ENCODE measurements at regions of chr11 and their contacts with region 1.

Region 1: GRCh38 chr11:65117216-65118096 is at the start of gene ZNHIT2:
- DNase-seq: peak; percentile 100
- ATAC-seq: peak; percentile 68
- H3K4me3 Mint-ChIP-seq: peak within 1 kb of the TSS; percentile 88
- H3K27ac Mint-ChIP-seq: peak within 1 kb of the TSS; percentile 95
- H3K4me1 Mint-ChIP-seq: peaks cover 57% of the 10 kb centered on the region
- H3K27me3 Mint-ChIP-seq: no peaks in the 10 kb centered on the region
- total RNA-seq, gene ZNHIT2: 7.1 to 9.7 TPM

Region 2: GRCh38 chr11:64341851-64342791 is 775.3 kb before region 1 on chr11:
- CTCF ChIA-PET with region 1: no interaction called
- POLR2A ChIA-PET with region 1: no interaction called
- intact Hi-C with region 1: loop called in 1 of 2 experiments (anchors 10 kb)
- DNase-seq: peak; percentile 96
- ATAC-seq: peak; percentile 77
- H3K4me3 Mint-ChIP-seq: no peak overlapping the region
- H3K27ac Mint-ChIP-seq: no peak overlapping the region
- H3K4me1 Mint-ChIP-seq: peaks cover 28% of the 10 kb centered on the region
- H3K27me3 Mint-ChIP-seq: no peaks in the 10 kb centered on the region

Region 3: DNA sequence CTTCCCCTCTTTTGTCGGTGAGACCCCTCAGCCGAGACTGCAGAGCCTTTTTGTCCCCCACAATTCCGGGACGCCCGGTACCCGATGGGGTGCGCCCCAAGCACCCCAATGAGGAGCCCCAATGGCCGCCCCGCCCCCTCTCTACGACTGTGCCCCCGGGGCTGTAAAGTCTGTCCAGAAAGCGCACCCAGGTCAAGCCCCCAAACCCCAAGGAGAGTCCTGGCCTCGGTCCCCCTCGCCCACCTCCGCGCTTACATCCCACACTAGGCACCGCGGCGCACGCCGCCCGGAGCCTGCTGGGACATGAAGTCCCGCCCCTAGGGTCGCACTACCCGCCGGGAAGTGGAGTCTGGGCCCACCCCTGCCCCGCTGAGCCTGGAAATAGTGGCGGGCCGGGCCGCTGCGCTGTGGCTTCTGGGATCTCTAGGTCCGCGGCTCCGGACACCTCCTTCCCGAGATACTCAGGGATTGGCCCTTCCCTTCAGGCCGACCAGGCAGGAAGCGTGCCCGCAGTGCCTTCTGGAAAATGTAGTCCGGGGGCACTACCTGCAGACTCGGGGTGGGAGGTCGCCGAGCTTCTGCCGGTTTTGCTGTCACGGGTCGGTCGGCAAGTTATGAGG is 307.1 kb before region 1 on chr11 and contains the start of gene MEN1:
- CTCF ChIA-PET with region 1: no interaction called
- POLR2A ChIA-PET with region 1: no interaction called
- intact Hi-C with region 1: loop called in 1 of 2 experiments (anchors 1 kb)
- DNase-seq: peak; percentile 92
- ATAC-seq: peak; percentile 95
- H3K4me3 Mint-ChIP-seq: peak within 1 kb of the TSS; percentile 93
- H3K27ac Mint-ChIP-seq: peak within 1 kb of the TSS; percentile 85
- H3K4me1 Mint-ChIP-seq: peaks cover 21% of the 10 kb centered on the region
- H3K27me3 Mint-ChIP-seq: no peaks in the 10 kb centered on the region
- total RNA-seq, gene MEN1: 34.8 to 38.5 TPM

Region 4: DNA sequence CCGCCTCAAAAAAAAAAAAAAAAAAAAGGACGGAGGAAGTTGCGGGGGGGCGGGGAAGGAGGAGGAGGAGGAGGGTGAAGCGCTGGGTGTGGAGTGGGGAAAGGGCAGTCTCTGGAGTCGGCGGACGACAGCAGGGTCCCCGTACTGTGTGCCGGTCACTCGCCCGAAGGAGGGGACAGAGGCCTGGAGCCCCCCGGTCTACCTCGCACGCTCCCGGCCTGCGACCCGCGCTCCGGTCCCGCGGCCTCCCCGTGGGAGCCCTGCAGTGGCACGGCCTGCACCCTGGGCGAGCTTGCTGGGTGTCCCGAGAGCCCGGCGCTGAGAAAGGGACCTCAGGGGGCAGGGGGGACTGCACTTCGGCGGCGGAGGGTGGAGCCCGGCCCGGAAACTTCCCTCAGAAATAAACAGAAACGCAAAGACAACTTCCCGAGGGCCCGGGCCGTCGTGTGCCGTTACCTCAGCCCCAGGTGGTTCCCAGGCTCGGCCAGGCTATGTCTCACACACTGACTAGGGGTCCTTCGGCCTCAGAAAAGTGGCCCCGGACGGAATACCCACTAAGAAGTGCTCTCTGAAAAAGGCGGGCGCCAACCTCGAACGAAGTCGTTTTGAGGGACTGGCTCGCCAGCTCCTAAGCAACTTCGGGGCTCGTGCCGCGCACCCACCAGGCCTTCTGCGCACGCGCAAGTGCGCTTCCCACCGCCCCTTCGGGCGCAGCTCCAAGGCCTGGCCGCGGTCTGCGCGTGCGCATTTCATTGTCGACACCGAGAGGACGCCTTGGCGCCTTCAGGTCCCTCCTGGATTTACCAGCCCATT is 145.8 kb before region 1 on chr11 and contains the start of gene MAJIN:
- CTCF ChIA-PET with region 1: no interaction called
- POLR2A ChIA-PET with region 1: no interaction called
- intact Hi-C with region 1: no loop called
- DNase-seq: peak; percentile 96
- ATAC-seq: peak; percentile 48
- H3K4me3 Mint-ChIP-seq: peak within 1 kb of the TSS; percentile 63
- H3K27ac Mint-ChIP-seq: peak within 1 kb of the TSS; percentile 94
- H3K4me1 Mint-ChIP-seq: peaks cover 42% of the 10 kb centered on the region
- H3K27me3 Mint-ChIP-seq: no peaks in the 10 kb centered on the region
- total RNA-seq, gene MAJIN: 1.2 to 1.6 TPM

Region 5: GRCh38 chr11:65013692-65014145 is 103.7 kb before region 1 on chr11:
- CTCF ChIA-PET with region 1: interaction called, 6 read pairs
- POLR2A ChIA-PET with region 1: no interaction called
- intact Hi-C with region 1: loop called (anchors 1 kb)
- DNase-seq: peak; percentile 90
- ATAC-seq: peak; percentile 87
- H3K4me3 Mint-ChIP-seq: peak overlapping the region; percentile 83
- H3K27ac Mint-ChIP-seq: peak overlapping the region; percentile 96
- H3K4me1 Mint-ChIP-seq: peaks cover 25% of the 10 kb centered on the region
- H3K27me3 Mint-ChIP-seq: no peaks in the 10 kb centered on the region

Region 6: GRCh38 chr11:65083834-65084597 is 33.4 kb before region 1 on chr11 and contains the starts of genes CDCA5 and ZFPL1:
- CTCF ChIA-PET with region 1: interaction called, 4 read pairs
- POLR2A ChIA-PET with region 1: interaction called, 12 read pairs
- intact Hi-C with region 1: loop called (anchors 1 kb)
- DNase-seq: peak; percentile 97
- ATAC-seq: peak; percentile 81
- H3K4me3 Mint-ChIP-seq: peak within 1 kb of the TSS; percentile 99
- H3K27ac Mint-ChIP-seq: peak within 1 kb of the TSS; percentile 98
- H3K4me1 Mint-ChIP-seq: peaks cover 41% of the 10 kb centered on the region
- H3K27me3 Mint-ChIP-seq: no peaks in the 10 kb centered on the region
- total RNA-seq, gene CDCA5: 111 to 119 TPM
- total RNA-seq, gene ZFPL1: 24.2 to 31.8 TPM

Region 7: DNA sequence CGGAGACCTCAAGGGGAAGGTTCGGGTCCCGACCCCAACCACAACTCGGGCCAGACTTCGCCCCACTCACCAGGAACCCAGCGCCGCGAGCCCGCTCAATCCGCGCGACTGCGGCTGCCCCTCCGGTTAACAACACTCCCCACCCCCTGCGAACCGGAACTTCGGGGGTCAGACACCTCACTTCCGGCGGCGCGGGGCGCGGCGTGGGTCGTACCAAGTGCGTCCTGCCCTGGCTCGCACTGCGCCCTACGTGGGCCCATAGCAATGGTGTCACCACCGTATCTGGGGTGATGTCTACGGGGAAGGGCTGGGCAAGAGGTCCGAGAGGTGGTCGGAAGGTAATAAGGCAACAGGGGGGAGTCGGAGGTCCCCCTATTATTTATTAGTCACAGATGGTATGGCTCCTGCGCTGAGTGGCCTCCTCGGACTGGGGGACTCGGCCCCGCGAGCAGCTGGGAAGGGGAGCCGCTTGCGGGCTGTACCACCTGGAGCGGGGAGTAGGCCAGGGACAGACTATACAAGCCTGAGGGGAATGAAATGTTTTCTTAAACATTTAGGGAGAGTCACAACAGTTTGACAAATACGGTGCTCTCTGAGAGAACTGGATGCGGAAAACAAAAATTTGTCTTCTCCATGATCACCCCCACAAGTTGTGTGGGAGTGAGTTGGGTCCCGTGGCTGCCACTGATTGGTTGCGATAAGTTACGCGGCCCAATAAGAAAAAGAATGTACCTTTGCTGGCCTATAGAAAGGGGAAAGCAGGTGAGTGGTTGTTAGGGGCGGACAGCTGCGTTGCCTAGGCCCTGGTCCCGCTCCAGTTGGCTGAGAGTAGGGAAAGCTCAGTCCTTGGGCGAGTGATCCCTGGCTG is 17.2 kb after region 1 on chr11 and contains the start of gene SYVN1:
- CTCF ChIA-PET with region 1: interaction called, 15 read pairs
- POLR2A ChIA-PET with region 1: interaction called, 19 read pairs
- intact Hi-C with region 1: loop called (anchors 1 kb)
- DNase-seq: peak; percentile 95
- ATAC-seq: peak; percentile 91
- H3K4me3 Mint-ChIP-seq: peak within 1 kb of the TSS; percentile 97
- H3K27ac Mint-ChIP-seq: peak within 1 kb of the TSS; percentile 97
- H3K4me1 Mint-ChIP-seq: peaks cover 27% of the 10 kb centered on the region
- H3K27me3 Mint-ChIP-seq: no peaks in the 10 kb centered on the region
- total RNA-seq, gene SYVN1: 24.3 to 31.1 TPM

Measured in activated CD4-positive, alpha-beta T cell treated with anti-CD3 and anti-CD28 coated beads for 36 hours (primary cell).